CD8-positive, alpha-beta T cell (primary cell): ENCODE measurements at regions of chr15 and their contacts with region 1.

Region 1: DNA sequence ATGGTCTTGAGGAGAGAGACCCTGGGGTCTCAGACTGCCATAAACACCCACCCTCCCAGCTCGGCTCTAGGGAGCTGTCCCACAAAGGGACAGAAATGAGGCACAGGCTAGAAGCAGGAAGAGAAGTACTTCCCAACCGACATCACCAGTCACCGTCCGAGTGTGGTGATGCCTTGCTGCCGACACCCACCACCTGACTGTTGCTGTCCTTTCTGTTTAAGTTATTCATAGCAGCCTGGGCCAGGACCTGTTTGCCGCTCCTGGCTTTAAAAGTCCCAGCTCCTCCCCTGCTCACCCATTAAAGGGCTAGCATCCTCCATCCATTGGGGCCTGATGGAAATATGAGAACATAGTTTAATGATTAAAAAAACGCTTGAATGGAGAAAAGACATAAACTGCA is 13.2 kb upstream of the SPG11 start:
- DNase-seq: peak in 5 of 9 experiments; percentile 21 to 70 (median 41)
- ATAC-seq: peak; percentile 39
- H3K4me3 ChIP-seq: peak overlapping the region; percentile 41 to 43
- H3K4me3 Mint-ChIP-seq: peak overlapping the region; percentile 73
- H3K27ac ChIP-seq: peak overlapping the region; percentile 42 to 89
- H3K27ac Mint-ChIP-seq: peak overlapping the region; percentile 94
- H3K4me1 ChIP-seq: peaks cover 91% of the 10 kb centered on the region
- H3K4me1 Mint-ChIP-seq: peaks cover 89% of the 10 kb centered on the region
- H3K27me3 ChIP-seq: no peaks in the 10 kb centered on the region
- H3K27me3 Mint-ChIP-seq: no peaks in the 10 kb centered on the region
- CTCF ChIP-seq: no peak

Region 2: GRCh38 chr15:44719293-44719999 is 42.8 kb after region 1 on chr15:
- CTCF ChIA-PET with region 1: interaction called, 12 read pairs
- POLR2A ChIA-PET with region 1: interaction called, 1,993 read pairs
- intact Hi-C with region 1: no loop called
- DNase-seq: peak in 7 of 9 experiments; percentile 44 to 88 (median 61)
- ATAC-seq: peak; percentile 66
- H3K4me3 ChIP-seq: peak overlapping the region in 1 of 2 experiments; percentile 9
- H3K4me3 Mint-ChIP-seq: peak overlapping the region; percentile 66
- H3K27ac ChIP-seq: peak overlapping the region; percentile 28 to 86
- H3K27ac Mint-ChIP-seq: peak overlapping the region; percentile 96
- H3K4me1 ChIP-seq: peaks cover 92% of the 10 kb centered on the region
- H3K4me1 Mint-ChIP-seq: peaks cover 90% of the 10 kb centered on the region
- H3K27me3 ChIP-seq: no peaks in the 10 kb centered on the region
- H3K27me3 Mint-ChIP-seq: no peaks in the 10 kb centered on the region
- CTCF ChIP-seq: no peak